PC-9 (cell line): ENCODE measurements at regions of chr3 and their contacts with region 1.

Region 1: GRCh38 chr3:169149349-169149890 is 514.1 kb downstream of the MECOM start:
- DNase-seq: peak; percentile 73 to 95
- H3K4me3 ChIP-seq: peak overlapping the region; percentile 67
- H3K27ac ChIP-seq: no peak overlapping the region
- H3K4me1 ChIP-seq: peaks cover 25% of the 10 kb centered on the region
- H3K27me3 ChIP-seq: no peaks in the 10 kb centered on the region
- CTCF ChIP-seq: peak; percentile 85

Region 2: DNA sequence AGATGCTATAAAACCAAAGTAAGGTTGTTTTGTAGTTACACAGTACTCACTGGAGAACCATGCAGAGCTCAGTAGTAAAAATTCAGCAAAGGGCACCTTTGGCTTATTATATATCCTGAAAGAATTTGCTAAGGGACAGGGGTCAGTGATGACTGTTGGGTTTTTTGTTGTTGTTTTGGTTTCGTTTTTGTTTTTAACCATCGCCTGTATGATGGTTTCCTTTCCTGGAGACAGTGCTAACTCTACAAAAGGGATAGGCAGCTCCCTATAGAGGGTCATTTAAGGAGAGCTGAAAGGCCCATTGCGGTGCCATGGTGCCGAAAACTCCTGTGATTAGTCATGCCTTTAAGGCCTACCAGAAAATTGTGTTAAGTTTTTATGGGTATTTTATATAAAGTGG is 935.5 kb before region 1 on chr3:
- CTCF ChIA-PET with region 1: no interaction called
- POLR2A ChIA-PET with region 1: no interaction called
- intact Hi-C with region 1: loop called (anchors 10 kb)
- DNase-seq: no peak
- H3K4me3 ChIP-seq: no peak overlapping the region
- H3K27ac ChIP-seq: no peak overlapping the region
- H3K4me1 ChIP-seq: no peaks in the 10 kb centered on the region
- H3K27me3 ChIP-seq: no peaks in the 10 kb centered on the region
- CTCF ChIP-seq: no peak

Region 3: DNA sequence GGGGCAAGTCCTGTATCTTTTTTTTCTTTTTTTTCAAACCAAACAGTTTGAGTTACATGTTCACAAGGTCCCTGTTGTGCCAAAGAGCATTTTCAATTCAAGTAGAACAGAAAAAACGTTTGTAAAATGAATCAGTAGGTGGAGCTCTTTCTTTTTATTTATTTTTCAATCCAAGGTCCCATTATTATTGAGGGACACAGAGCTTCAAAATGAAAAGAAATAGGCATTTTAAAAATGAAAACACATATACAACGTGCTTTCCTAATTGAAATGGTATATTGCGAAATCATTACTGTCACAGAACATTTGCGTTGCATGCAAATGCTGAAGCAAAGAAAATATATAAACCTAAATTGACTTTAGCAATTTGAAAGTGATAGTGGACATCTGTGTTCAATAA is 196.9 kb before region 1 on chr3:
- CTCF ChIA-PET with region 1: interaction called, 5 read pairs
- POLR2A ChIA-PET with region 1: no interaction called
- intact Hi-C with region 1: loop called (anchors 1 kb)
- DNase-seq: peak in 1 of 2 experiments; percentile 55
- H3K4me3 ChIP-seq: no peak overlapping the region
- H3K27ac ChIP-seq: peak overlapping the region; percentile 64
- H3K4me1 ChIP-seq: peaks cover 33% of the 10 kb centered on the region
- H3K27me3 ChIP-seq: no peaks in the 10 kb centered on the region
- CTCF ChIP-seq: peak; percentile 58; the same call in 1 of the 2 replicates

Region 4: DNA sequence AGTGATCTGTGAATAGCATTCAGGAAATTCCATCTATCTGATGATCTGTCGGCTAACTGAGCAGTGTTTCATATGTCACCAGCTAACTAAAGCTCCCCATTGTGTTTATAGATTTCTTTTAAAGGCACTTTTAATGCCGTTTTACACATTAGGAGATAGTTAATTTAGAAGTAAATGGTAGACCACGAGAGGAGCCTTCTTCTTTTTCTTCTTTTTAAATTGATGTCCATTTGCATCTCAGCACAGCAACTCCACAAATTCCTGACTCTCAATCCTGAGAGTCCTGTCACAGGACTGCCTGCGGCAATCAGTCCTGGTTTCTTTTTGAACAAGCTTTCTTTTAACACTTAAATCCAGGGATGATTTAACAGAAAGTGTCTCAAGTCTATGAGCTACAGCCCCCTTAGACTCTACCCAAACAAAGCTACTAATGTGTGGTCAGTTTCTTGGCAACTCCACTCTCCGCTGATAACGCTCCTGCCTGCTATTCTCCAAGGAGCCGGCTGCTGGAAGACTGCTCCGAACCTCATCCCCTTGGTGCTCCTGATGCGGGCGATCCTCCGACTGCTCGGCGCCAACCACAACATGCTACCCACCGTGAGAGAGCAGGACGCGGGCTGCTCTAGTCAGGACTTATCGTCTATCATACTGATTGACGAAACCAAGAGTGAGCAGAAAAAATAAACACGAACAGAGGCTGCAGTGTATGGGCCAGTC is 92.7 kb after region 1 on chr3:
- CTCF ChIA-PET with region 1: interaction called, 3 read pairs
- POLR2A ChIA-PET with region 1: no interaction called
- intact Hi-C with region 1: loop called (anchors 1 kb)
- DNase-seq: peak; percentile 33 to 60
- H3K4me3 ChIP-seq: peak overlapping the region; percentile 31; the same call in 1 of the 2 replicates
- H3K27ac ChIP-seq: peak overlapping the region; percentile 71
- H3K4me1 ChIP-seq: peaks cover 29% of the 10 kb centered on the region
- H3K27me3 ChIP-seq: no peaks in the 10 kb centered on the region
- CTCF ChIP-seq: no peak

Region 5: GRCh38 chr3:169362301-169362700 is 212.9 kb after region 1 on chr3:
- CTCF ChIA-PET with region 1: no interaction called
- POLR2A ChIA-PET with region 1: no interaction called
- intact Hi-C with region 1: loop called (anchors 5 kb)
- DNase-seq: no peak
- H3K4me3 ChIP-seq: no peak overlapping the region
- H3K27ac ChIP-seq: no peak overlapping the region
- H3K4me1 ChIP-seq: no peaks in the 10 kb centered on the region; the same call in 1 of the 2 replicates
- H3K27me3 ChIP-seq: no peaks in the 10 kb centered on the region
- CTCF ChIP-seq: no peak

Region 6: DNA sequence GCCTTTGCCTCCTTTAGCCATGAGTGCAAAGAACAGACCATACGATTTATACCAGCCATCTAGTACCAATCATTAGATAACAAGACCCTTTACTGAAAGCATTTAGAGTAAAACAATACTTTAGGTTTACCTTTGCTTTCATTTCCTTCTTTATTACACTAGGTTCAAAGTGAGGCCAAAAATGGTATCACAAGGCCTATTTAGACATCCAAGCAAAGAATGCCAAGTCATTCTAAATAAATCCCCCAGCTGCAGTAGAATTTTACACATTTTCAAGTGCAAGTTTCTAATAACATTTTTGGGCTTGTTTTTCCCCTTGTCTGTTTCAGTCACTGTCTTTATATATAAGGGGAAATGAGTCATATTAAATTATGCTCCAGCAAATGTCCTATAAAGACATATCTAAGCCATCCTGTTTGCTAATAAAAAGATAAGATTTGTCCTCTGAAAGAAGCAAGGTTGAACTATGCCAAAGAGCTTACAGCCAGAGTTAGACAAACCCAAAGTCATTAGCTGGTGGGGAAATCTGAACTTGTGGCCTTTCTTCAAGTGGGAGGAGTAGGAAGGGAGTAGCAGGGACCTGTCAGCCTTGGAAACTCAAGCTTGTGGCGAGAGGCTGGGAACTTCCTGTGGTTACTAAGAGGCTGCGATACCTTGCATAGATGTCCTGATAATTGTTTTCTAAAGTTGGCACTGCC is 281.4 kb after region 1 on chr3:
- CTCF ChIA-PET with region 1: interaction called, 4 read pairs
- POLR2A ChIA-PET with region 1: no interaction called
- intact Hi-C with region 1: loop called (anchors 5 kb)
- DNase-seq: peak; percentile 68 to 98
- H3K4me3 ChIP-seq: peak overlapping the region; percentile 3; the same call in 1 of the 2 replicates
- H3K27ac ChIP-seq: peak overlapping the region; percentile 88
- H3K4me1 ChIP-seq: peaks cover 48% of the 10 kb centered on the region
- H3K27me3 ChIP-seq: no peaks in the 10 kb centered on the region
- CTCF ChIP-seq: no peak

Region 7: GRCh38 chr3:169668957-169669681 is 519.7 kb after region 1 on chr3:
- CTCF ChIA-PET with region 1: interaction called, 16 read pairs
- POLR2A ChIA-PET with region 1: interaction called, 4 read pairs
- intact Hi-C with region 1: no loop called
- DNase-seq: peak; percentile 78 to 88
- H3K4me3 ChIP-seq: peak overlapping the region; percentile 61
- H3K27ac ChIP-seq: no peak overlapping the region
- H3K4me1 ChIP-seq: peaks cover 18% of the 10 kb centered on the region; the same call in 1 of the 2 replicates
- H3K27me3 ChIP-seq: peaks cover 4% of the 10 kb centered on the region; the same call in 1 of the 2 replicates
- CTCF ChIP-seq: peak; percentile 91